ENCODE measurements at regions of chr12 and their contacts with region 1.

Region 1: DNA sequence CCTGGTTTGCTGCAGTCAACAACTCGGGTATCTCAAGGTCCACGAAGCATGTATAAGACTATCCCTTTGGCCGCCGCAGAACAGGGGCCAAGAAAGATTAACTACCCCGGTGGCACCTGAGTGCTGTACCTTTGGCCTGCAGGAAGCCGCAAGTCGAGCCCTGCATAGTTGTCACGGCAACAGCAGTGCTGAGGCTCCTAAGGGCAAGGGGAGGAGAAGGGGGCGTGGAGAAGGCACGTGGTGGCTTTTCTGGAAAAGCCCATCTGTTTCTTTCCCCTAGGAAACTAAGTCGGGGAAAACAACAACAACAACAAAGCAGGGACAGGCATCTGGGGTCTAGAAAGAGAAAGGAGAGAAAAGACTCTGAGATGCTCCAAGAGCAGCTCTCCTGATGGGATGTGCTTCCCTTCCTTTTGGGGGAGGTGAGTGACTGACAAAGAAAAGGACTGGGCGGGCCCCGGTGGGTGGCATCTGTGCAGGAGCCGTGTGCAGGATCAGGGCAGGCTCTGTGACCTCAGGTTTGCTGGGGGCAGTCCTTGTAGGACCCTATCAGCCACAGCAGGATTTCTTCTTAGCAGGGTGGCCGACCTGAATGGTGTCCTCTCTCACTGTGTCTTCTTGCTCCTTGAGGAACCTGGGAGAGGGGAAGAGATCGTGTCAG is 123.9 kb downstream of the PRMT8 start:
- DNase-seq: no peak
- ATAC-seq: no peak
- H3K4me3 ChIP-seq: no peak overlapping the region
- H3K27ac ChIP-seq: no peak overlapping the region
- H3K4me1 ChIP-seq: peaks cover 9% of the 10 kb centered on the region
- H3K27me3 ChIP-seq: no peaks in the 10 kb centered on the region
- CTCF ChIP-seq: no peak

Region 2: DNA sequence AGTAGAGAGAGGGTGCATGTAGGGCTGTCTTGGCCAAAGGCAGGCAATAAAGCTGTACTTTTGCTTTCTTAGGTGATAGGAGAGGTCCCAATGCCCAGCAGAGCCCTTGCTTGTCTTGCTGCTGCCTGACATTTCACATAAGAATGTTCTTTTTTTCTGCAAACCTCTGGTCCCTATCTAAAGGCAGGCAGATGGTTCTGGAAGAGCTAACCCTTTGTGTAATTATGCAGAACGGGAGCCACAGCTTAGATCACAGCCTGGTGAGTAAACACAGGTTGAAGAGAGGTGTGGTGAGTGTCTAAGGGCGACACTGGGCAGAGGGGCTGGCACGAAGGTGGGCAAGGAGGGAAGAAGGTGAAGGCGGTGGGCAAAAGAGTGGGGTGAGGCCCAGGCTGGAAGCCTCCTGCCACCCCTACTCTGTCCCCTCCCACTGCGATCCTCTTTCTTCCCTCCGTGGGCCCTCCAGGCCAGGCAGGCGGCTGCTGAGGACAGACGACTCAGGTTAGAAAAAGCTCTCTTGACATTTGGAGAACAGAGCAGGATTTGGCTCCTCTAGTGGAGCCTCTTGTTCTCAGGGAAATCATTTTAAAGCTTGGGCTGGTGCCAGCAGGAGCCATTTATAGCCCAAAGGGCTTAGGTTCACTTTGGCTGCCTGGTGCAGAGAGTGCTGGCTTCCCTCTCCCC is 81.1 kb before region 1 on chr12:
- intact Hi-C with region 1: loop called in 1 of 2 experiments (anchors 5 kb)
- DNase-seq: peak in 1 of 2 donors; percentile 78
- ATAC-seq: peak; percentile 42 to 83 (median 66)
- H3K4me3 ChIP-seq: no peak overlapping the region
- H3K27ac ChIP-seq: peak overlapping the region; percentile 23
- H3K4me1 ChIP-seq: peaks cover 26% of the 10 kb centered on the region
- H3K27me3 ChIP-seq: no peaks in the 10 kb centered on the region
- CTCF ChIP-seq: peak; percentile 13

Region 3: DNA sequence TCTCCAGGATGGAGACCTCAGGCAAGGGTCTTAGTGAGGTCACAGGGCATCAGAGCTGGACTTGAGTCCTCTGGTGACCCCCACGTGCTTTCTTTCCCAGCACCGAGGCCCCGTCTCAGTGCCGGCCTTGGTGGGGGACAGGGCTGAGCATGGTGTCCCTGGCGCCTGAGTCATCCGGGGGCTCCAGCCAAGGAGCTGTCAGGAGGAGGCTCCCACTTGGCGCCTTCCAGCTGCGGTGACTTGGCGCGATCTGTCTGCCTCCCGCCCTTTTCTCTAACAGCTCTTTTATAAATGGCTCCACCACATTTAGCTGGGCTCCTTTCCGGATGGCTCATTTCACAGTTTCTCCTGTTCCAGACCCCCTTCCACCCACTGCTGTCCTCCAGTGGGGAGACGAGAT is 63.5 kb before region 1 on chr12:
- intact Hi-C with region 1: no loop called
- DNase-seq: peak in 1 of 2 donors; percentile 43
- ATAC-seq: peak in 1 of 4 donors; percentile 37
- H3K4me3 ChIP-seq: no peak overlapping the region
- H3K27ac ChIP-seq: no peak overlapping the region
- H3K4me1 ChIP-seq: no peaks in the 10 kb centered on the region
- H3K27me3 ChIP-seq: peaks cover 0 to 3% (median 1%) of the 10 kb centered on the region in 3 donors
- CTCF ChIP-seq: no peak

Region 4: DNA sequence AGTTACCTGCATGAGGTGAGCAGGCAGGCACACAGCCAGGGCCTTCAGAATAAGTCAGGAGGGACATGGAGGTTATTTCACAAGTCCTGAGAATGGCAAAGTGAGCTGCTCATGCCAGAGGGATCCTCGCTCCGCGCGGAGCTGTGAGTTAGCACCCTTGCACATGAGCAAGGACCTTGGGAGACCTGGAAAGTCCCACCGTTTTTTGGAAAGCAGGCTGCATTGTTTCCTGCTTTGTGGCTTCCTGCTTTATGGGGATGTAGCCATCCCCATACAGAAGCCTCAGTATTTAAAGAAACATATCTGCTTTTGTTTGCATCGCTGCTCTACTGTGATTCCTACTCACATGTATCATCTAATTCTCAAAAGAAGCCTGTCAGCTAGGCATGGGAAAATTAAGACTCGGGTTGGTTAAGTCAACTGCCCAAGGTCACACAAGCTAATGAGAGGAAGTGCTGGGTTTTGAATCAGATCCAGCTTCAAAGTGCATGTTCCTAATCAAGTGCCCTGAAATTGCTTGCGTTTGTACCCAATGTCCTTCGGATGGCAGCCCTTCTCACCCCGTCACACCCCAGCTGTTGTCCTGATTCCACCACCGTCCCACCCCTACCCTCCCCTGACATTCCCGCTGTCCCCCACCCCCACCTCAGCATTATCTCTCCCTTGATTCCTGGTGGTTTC is 31.8 kb after region 1 on chr12:
- intact Hi-C with region 1: no loop called
- DNase-seq: no peak
- ATAC-seq: no peak
- H3K4me3 ChIP-seq: no peak overlapping the region
- H3K27ac ChIP-seq: no peak overlapping the region
- H3K4me1 ChIP-seq: no peaks in the 10 kb centered on the region
- H3K27me3 ChIP-seq: no peaks in the 10 kb centered on the region
- CTCF ChIP-seq: no peak